ENCODE measurements at regions of chr3 and their contacts with region 1.

Region 1: GRCh38 chr3:72949016-72949415 is 47.6 kb upstream of the PPP4R2 start:
- DNase-seq: no peak
- H3K4me3 ChIP-seq: no peak overlapping the region
- H3K27ac ChIP-seq: no peak overlapping the region
- H3K4me1 ChIP-seq: no peaks in the 10 kb centered on the region
- H3K27me3 ChIP-seq: no peaks in the 10 kb centered on the region
- CTCF ChIP-seq: no peak

Region 2: GRCh38 chr3:72134989-72135451 is 814.0 kb before region 1 on chr3:
- intact Hi-C with region 1: no loop called
- DNase-seq: no peak
- H3K4me3 ChIP-seq: no peak overlapping the region
- H3K27ac ChIP-seq: no peak overlapping the region
- H3K4me1 ChIP-seq: no peaks in the 10 kb centered on the region
- H3K27me3 ChIP-seq: no peaks in the 10 kb centered on the region
- CTCF ChIP-seq: no peak

Region 3: DNA sequence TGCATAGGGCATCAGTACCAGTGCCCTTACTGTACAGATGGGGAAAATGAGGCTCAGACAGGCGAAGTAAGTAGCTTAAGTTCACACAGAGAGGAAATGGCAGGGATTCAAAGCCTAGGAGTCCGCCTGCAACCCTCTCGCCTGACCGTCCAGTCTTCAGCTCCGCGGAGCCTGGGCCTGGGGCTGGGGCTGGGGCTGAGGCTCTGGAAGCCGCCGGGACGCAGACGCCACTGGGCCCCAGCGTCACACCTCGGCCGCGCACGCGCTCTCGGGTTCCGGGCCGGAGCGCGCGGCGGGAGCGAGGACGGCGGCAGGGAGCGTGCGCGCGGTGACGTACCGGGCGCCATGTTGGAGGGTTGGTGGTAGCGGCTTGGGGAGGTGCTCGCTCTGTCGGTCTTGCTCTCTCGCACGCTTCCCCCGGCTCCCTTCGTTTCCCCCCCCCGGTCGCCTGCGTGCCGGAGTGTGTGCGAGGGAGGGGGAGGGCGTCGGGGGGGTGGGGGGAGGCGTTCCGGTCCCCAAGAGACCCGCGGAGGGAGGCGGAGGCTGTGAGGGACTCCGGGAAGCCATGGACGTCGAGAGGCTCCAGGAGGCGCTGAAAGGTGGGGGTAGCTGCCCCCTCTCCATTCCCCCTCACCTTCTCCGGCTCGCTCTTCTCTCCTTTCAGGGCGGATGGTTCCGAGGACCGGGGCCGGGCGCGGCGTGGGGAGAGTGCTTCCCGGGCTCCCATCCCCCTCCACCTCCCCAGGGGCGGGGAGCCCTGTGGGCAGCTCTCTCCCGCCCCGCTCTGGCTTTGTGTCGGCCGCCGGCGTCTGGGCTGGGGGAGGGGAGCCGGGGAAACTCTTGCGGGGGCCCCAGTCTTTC is 47.7 kb after region 1 on chr3 and contains the start of gene PPP4R2:
- intact Hi-C with region 1: loop called (anchors 5 kb)
- DNase-seq: peak; percentile 88
- H3K4me3 ChIP-seq: peak within 1 kb of the TSS; percentile 79
- H3K27ac ChIP-seq: peak within 1 kb of the TSS; percentile 95
- H3K4me1 ChIP-seq: peaks cover 20% of the 10 kb centered on the region
- H3K27me3 ChIP-seq: no peaks in the 10 kb centered on the region
- CTCF ChIP-seq: no peak
- total RNA-seq, gene PPP4R2: 60.3 to 92.9 TPM

Region 4: DNA sequence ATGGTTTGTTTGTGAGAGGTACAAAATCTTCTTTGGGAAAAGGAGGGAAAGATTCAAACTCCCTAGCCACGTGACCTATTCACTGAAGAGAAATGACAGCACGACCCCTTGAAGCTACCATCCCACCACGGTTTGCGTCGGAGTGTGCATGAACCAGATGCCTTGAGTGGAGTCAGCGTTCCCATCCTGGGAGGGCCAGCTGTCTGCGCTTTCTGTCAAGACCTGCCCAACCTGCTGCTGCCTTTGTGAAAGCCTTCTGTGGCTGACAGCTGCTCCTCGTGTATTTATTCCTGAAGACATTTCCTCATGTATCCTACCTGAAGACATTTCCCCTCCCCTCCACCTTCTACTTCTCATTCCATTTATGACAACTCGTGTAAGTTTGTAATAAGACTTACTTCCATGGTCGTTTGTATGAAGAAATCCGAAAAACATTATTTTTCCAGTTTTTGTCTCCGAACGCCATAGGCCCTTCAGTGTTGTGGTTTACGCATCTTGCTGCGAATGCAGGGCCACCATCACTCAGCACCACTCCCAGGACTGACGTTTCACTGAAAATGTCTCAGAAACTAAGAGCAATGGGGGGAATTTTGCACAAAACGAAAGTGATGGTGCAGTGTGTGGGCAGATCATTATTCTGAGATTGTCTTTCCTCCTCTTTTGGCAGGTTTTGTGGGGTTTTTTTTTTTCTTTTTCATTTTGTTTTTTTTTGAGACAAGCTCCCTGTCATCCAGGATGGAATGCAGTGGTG is 131.4 kb after region 1 on chr3:
- intact Hi-C with region 1: loop called (anchors 5 kb)
- DNase-seq: no peak
- H3K4me3 ChIP-seq: no peak overlapping the region
- H3K27ac ChIP-seq: no peak overlapping the region
- H3K4me1 ChIP-seq: no peaks in the 10 kb centered on the region
- H3K27me3 ChIP-seq: no peaks in the 10 kb centered on the region
- CTCF ChIP-seq: no peak

Region 5: GRCh38 chr3:73552719-73553118 is 603.7 kb after region 1 on chr3:
- intact Hi-C with region 1: no loop called
- DNase-seq: no peak
- H3K4me3 ChIP-seq: no peak overlapping the region
- H3K27ac ChIP-seq: no peak overlapping the region
- H3K4me1 ChIP-seq: no peaks in the 10 kb centered on the region
- H3K27me3 ChIP-seq: no peaks in the 10 kb centered on the region
- CTCF ChIP-seq: no peak

Measured in colonic mucosa (tissue), 4 donors.